ENCODE measurements at regions of chr14 and their contacts with region 1.

Region 1: GRCh38 chr14:24710403-24711112 is 76.6 kb upstream of the GZMB start:
- DNase-seq: peak in 4 of 5 donors; percentile 40 to 52 (median 48)
- ATAC-seq: peak in 3 of 4 donors; percentile 49 to 76 (median 72)
- H3K4me3 ChIP-seq: peak overlapping the region in 8 of 12 donors; percentile 13 to 52 (median 31)
- H3K27ac ChIP-seq: no peak overlapping the region
- H3K4me1 ChIP-seq: peaks cover 0 to 3% (median 0%) of the 10 kb centered on the region in 12 donors
- H3K27me3 ChIP-seq: no peaks in the 10 kb centered on the region
- CTCF ChIP-seq: peak; percentile 77 to 91 (median 80)
- POLR2A ChIP-seq: no peak

Region 2: GRCh38 chr14:25400607-25401206 is 690.1 kb after region 1 on chr14:
- intact Hi-C with region 1: loop called in 9 of 10 experiments (anchors 5 to 10 kb)
- DNase-seq: peak in 1 of 5 donors; percentile 22
- ATAC-seq: no peak
- H3K4me3 ChIP-seq: no peak overlapping the region
- H3K27ac ChIP-seq: no peak overlapping the region
- H3K4me1 ChIP-seq: no peaks in the 10 kb centered on the region
- H3K27me3 ChIP-seq: peaks cover 0 to 4% (median 0%) of the 10 kb centered on the region in 9 donors
- CTCF ChIP-seq: peak; percentile 49 to 77 (median 72)
- POLR2A ChIP-seq: no peak

Region 3: DNA sequence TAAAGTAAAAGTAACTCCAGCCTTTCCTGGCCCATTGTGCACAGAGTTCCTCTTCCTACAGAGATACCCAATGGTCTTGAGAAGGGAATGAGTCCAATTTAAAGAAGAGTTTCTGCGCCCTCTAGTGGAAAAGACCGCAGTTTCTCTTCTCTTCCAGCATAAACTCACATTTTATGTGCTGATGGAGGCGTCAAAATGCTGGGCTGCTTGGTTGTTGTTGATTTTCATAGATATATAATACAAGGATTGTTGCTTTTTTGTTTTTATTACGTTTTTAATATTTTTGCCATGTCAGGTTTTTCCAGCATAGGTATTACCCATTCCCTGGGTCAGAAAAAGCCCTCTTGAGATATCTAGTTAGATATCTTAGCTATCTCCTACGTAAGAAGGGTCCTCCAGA is 696.3 kb after region 1 on chr14:
- intact Hi-C with region 1: loop called in 8 of 10 experiments (anchors 5 to 10 kb)
- DNase-seq: no peak
- ATAC-seq: no peak
- H3K4me3 ChIP-seq: no peak overlapping the region
- H3K27ac ChIP-seq: no peak overlapping the region
- H3K4me1 ChIP-seq: no peaks in the 10 kb centered on the region
- H3K27me3 ChIP-seq: peaks cover 0 to 2% (median 0%) of the 10 kb centered on the region in 9 donors
- CTCF ChIP-seq: peak in 9 of 12 donors; percentile 16 to 39 (median 34)
- POLR2A ChIP-seq: no peak

Measured in heart left ventricle (tissue), 16 donors.